Activated T-helper 2 cell treated with anti-CD3 and anti-CD28 coated beads, Interferon-gamma antibody, Interleukin-2, Interleukin-4, amounts not matched to agents 10 μg/mL and 5 μg/mL and 100 μg/mL, durations not matched to agents 14 hours and 24 hours and 36 hours (primary cell): ENCODE measurements at regions of chr1 and their contacts with region 1.

Region 1: DNA sequence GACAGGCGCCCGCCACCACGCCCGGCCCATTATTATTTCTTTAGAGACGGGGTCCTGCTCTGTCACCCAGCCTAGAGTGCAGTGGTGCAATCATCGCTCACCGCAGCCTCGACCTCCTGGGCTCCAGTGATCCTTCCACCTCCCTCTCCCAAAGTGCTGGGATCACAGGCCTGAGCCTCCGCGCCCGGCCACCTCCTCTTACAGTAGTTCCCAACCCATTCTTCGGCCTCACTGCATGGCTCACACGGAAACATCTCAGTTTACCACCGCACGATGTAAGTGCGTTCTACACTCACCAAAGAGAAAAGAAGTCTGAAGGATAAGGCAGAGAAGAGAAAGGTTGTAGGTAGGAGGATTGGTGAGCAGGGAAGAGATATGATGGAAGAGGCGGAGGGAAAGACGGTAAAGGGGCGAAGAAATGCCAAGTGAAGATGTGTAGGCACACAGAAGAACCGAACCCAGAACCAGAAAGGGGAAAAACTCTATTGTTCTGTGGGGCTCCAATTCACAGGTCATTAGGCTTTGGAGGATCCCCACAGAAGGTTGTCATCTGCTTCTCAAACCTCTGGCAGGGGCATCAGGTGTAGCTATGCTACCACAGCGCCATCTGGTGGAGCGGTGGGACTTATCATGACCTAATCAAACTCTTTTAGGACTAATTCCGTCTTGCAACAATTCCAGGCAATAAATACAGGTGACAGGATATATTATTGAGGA is 504.2 kb downstream of the SMYD3 start:
- DNase-seq: peak; percentile 54
- H3K4me3 Mint-ChIP-seq: no peak overlapping the region
- H3K27ac Mint-ChIP-seq: no peak overlapping the region
- H3K4me1 Mint-ChIP-seq: no peaks in the 10 kb centered on the region
- H3K27me3 Mint-ChIP-seq: no peaks in the 10 kb centered on the region

Region 2: GRCh38 chr1:245079021-245079609 is 923.8 kb before region 1 on chr1:
- intact Hi-C with region 1: loop called (anchors 10 kb)
- DNase-seq: no peak
- H3K4me3 Mint-ChIP-seq: no peak overlapping the region
- H3K27ac Mint-ChIP-seq: no peak overlapping the region
- H3K4me1 Mint-ChIP-seq: peaks cover 2% of the 10 kb centered on the region
- H3K27me3 Mint-ChIP-seq: peaks cover 4% of the 10 kb centered on the region

Region 3: DNA sequence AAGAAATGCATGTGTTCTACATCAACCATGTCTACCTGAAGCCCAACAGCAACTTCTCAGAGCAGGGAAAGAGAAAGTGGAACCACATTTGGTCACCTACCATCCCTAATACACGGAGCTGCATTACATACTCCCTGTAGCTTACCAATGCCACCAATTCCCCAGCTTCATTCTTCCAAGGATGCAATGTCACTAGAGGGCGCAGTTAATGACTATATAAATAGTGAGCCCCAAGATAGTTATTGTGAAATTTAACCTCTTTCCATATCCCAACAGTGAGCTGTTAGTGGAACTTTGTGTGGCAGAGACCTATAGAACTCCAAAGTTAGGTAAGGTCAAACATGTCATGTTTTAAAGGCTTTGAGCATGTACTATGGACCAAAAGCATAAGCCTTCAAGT is 114.1 kb before region 1 on chr1:
- intact Hi-C with region 1: loop called (anchors 1 kb)
- DNase-seq: no peak
- H3K4me3 Mint-ChIP-seq: no peak overlapping the region
- H3K27ac Mint-ChIP-seq: no peak overlapping the region
- H3K4me1 Mint-ChIP-seq: no peaks in the 10 kb centered on the region
- H3K27me3 Mint-ChIP-seq: no peaks in the 10 kb centered on the region

Region 4: DNA sequence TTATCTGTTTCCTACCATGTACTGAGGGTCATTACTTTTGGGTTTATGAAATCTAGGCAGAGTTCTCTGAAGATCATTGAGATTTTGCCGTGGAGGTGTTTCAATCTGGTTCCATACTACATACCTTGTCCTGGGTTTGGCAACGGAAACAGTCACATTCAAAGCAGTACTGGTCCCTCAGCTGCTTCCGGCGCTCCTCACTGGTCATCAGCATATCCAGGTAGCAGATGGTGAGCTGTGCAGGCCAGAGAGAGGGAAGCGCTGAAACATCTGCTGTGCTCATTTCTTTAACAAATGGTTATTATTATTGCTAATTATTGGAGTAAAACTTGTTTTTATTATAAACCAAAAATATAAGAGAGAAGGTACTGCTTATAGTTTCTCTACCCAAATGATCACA is 87.5 kb before region 1 on chr1:
- intact Hi-C with region 1: no loop called
- DNase-seq: no peak
- H3K4me3 Mint-ChIP-seq: no peak overlapping the region
- H3K27ac Mint-ChIP-seq: no peak overlapping the region
- H3K4me1 Mint-ChIP-seq: no peaks in the 10 kb centered on the region
- H3K27me3 Mint-ChIP-seq: no peaks in the 10 kb centered on the region